ENCODE measurements at regions of chr9 and their contacts with region 1.

Region 1: DNA sequence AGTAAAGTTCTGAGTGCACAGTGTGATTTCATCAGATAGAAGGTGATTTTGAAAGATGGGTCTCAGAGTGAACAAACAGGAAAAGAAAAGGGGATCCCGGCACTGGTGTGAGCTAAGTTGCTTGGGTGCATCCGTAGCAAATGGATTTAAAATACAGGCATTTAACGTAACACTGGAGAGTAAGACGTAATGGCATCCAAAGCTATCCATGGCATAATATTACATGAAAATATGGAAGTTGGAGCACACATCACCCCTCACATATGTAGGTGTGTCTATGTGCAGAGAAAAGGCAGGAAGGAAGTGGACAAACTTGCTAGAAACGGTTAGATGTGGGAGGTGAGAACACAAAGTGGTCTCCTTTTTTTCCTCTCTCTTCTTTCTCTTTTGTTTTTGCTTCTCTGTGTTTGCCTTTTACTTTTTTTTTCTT is 38.2 kb upstream of the SEMA4D start:
- DNase-seq: no peak
- ATAC-seq: no peak
- H3K4me3 ChIP-seq: peak overlapping the region in 1 of 10 donors; percentile 5
- H3K27ac ChIP-seq: peak overlapping the region in 1 of 10 donors; percentile 88
- H3K4me1 ChIP-seq: peaks cover 0 to 48% (median 0%) of the 10 kb centered on the region in 9 donors
- H3K27me3 ChIP-seq: no peaks in the 10 kb centered on the region
- CTCF ChIP-seq: no peak

Region 2: DNA sequence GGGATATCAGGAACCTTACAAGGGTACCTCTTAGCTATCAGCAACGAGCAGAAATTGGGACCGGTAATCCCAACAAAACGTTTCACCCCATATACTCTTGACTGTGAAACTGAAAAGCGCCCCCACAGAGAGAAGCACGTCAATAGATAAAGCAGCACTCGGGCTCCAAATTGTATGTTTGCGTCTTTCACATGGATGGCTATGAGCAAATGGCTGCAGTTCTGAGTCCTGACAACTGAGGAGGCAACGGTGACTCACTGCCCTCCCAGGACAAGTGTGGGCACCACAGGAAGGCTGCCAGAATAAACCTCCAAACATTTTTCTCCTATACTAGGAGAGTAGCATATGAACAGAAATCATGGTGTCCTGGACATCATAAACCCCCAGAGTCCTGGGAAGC is 74.9 kb before region 1 on chr9:
- intact Hi-C with region 1: loop called in 2 of 10 experiments (anchors 5 kb)
- DNase-seq: no peak
- ATAC-seq: peak in 1 of 8 donors; percentile 37
- H3K4me3 ChIP-seq: no peak overlapping the region
- H3K27ac ChIP-seq: no peak overlapping the region
- H3K4me1 ChIP-seq: peaks cover 0 to 74% (median 0%) of the 10 kb centered on the region in 9 donors
- H3K27me3 ChIP-seq: no peaks in the 10 kb centered on the region
- CTCF ChIP-seq: no peak

Region 3: DNA sequence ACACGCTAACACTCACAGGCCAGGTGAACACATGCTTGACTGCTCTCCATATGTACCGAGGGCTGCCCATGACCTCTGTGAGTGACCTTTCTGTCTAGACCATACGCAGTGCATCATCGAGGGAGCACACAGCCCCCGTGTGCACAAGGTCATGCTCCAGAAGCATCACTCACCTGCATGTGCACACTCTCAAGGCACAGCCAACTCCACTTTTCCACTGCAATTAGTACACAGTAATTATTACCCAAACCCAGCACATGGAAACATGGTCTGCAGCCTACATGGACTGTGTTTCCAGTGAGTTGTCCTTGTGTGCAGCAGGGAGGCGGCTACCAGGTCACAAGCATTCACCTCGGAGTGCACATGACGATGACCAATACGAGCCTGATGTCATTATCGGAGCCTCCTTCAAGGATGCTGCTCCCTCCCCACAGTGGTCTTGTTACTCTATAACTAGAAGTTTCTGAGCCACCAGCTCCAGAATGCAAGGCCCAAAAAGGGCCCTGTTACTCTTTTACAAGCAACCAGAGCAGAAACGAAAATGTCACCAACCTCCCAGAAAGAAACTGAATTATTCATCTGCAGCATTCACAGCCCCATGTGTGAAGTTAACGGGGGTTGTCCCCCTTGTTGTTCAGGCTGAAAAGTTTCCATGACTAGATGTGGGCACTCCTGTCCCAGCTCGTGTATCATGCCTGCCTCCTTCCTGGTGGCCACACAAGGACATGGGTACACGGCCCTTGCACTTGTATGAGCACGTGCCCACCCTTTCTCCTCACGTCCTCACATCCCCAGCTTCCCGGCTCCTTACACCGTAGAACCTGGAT is 69.5 kb before region 1 on chr9:
- intact Hi-C with region 1: loop called in 2 of 10 experiments (anchors 5 kb)
- DNase-seq: no peak
- ATAC-seq: no peak
- H3K4me3 ChIP-seq: no peak overlapping the region
- H3K27ac ChIP-seq: peak overlapping the region in 1 of 10 donors; percentile 88
- H3K4me1 ChIP-seq: peaks cover 0 to 88% (median 0%) of the 10 kb centered on the region in 9 donors
- H3K27me3 ChIP-seq: no peaks in the 10 kb centered on the region
- CTCF ChIP-seq: no peak

Measured in heart right ventricle (tissue), 16 donors.